Esophagus squamous epithelium (tissue), 5 donors: ENCODE measurements at regions of chr2 and their contacts with region 1.

Region 1: DNA sequence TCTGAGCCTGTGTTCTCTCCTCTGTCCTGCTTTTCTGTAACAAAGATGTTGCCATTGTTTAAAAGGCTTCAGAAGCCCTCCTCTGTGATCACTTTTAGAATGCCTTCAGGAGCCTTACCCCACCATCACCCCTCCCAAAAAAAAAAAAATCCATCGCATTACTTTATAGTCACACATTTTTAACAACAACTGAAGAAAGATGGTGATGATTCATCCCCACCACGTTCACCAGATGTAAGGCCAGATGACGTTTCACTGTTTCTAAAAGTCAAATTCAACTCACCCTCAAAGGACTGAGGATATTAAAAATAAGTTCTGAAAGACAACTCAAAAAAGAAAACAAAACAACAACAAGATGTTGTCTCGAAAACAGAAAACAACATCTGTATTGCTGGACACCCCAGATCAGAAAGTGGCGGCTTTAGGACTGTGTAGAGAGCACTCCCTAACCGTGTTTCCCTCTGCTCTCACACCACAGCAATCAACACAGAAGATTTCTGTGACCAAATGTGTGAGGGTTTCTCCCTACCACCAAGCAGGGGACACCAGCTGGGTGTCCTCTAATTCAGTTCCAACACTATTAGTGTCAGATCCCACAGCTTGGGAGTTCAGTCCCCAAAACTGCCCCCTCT is 61.9 kb upstream of the CREB1 start:
- DNase-seq: no peak
- H3K4me3 ChIP-seq: no peak overlapping the region
- H3K27ac ChIP-seq: peak overlapping the region in 1 of 4 donors; percentile 9
- H3K4me1 ChIP-seq: peaks cover 0 to 4% (median 0%) of the 10 kb centered on the region in 3 donors
- H3K27me3 ChIP-seq: no peaks in the 10 kb centered on the region
- CTCF ChIP-seq: no peak
- POLR2A ChIP-seq: no peak

Region 2: DNA sequence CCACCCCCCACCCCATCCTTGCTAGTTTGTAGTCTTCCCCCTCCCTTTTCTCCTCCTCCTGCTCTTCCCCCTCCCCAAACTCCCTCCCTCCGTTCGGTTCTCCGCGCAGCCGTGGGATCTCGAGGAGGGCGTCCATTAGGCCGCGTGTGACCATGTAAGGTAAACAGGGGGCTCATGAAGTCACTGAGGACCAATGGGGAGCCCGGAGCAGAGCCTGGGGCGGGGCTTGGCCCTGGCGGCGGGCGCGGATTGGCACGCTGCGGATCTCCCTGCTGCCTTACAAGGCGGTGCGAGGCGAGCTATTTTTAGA is 301.8 kb before region 1 on chr2:
- intact Hi-C with region 1: loop called (anchors 10 kb)
- DNase-seq: peak; percentile 94
- H3K4me3 ChIP-seq: peak overlapping the region; percentile 68 to 91 (median 76)
- H3K27ac ChIP-seq: peak overlapping the region; percentile 93 to 100 (median 100)
- H3K4me1 ChIP-seq: peaks cover 8 to 46% (median 14%) of the 10 kb centered on the region in 3 donors
- H3K27me3 ChIP-seq: no peaks in the 10 kb centered on the region
- CTCF ChIP-seq: no peak
- POLR2A ChIP-seq: no peak

Region 3: GRCh38 chr2:207854484-207855440 is 386.9 kb after region 1 on chr2:
- intact Hi-C with region 1: no loop called
- DNase-seq: no peak
- H3K4me3 ChIP-seq: no peak overlapping the region
- H3K27ac ChIP-seq: no peak overlapping the region
- H3K4me1 ChIP-seq: no peaks in the 10 kb centered on the region
- H3K27me3 ChIP-seq: no peaks in the 10 kb centered on the region
- CTCF ChIP-seq: no peak
- POLR2A ChIP-seq: no peak